SK-N-SH (cell line): ENCODE measurements at regions of chr2 and their contacts with region 1.

Region 1: GRCh38 chr2:218659258-218659987 is at the starts of genes BCS1L and ZNF142:
- DNase-seq: peak; percentile 96
- H3K4me3 ChIP-seq: peak within 1 kb of the TSS; percentile 90 to 94
- H3K27ac ChIP-seq: peak within 1 kb of the TSS; percentile 53 to 86
- H3K4me1 ChIP-seq: peaks cover 7 to 13% of the 10 kb centered on the region in 2 experiments; a peak in 2 of 4 replicates
- H3K27me3 ChIP-seq: no peaks in the 10 kb centered on the region
- CTCF ChIP-seq: no peak
- EP300 ChIP-seq: no peak
- RAD21 ChIP-seq: no peak
- polyA plus RNA-seq, gene BCS1L: 47.5 and 59.8 TPM in 2 replicates
- polyA plus RNA-seq, gene ZNF142: 5.7 and 8.1 TPM in 2 replicates

Region 2: GRCh38 chr2:218536804-218537494 is 122.5 kb before region 1 on chr2:
- CTCF ChIA-PET with region 1: no interaction called
- POLR2A ChIA-PET with region 1: no interaction called
- DNase-seq: no peak
- H3K4me3 ChIP-seq: no peak overlapping the region
- H3K27ac ChIP-seq: no peak overlapping the region
- H3K4me1 ChIP-seq: no peaks in the 10 kb centered on the region
- H3K27me3 ChIP-seq: no peaks in the 10 kb centered on the region
- CTCF ChIP-seq: no peak
- EP300 ChIP-seq: no peak
- RAD21 ChIP-seq: no peak

Region 3: DNA sequence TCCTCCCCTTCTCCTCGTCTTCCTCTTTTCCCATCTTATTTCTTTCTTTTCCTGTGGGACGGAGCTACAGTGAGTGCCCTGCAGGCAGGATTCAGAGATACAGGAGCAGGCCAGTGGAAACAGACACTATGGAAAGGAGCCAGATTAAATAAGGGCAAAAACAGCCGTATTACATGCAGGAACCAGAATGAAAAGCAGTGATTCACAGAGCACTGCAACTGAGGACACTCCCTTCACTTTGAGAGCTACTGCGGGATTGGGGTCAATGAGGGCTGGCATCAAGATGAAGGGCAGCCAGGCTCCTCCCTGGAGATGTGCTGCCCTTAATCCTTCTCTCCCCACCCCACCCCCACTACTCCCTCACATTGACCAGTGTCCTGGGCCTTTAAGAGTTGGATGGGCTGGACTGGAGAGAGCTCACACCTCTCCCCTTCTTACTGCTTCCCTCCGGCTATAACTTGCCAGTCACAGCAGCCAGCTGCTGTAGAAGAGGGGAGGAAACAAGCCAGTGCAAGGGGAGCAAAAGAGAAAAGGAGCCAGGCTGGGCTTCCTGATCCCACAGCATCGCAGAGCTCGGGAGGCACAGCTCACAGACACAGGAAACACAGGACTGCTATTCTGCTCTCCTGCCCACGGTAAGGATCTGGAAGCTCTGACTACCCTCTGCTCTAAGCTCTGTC is 51.8 kb before region 1 on chr2 and contains the start of gene PLCD4:
- CTCF ChIA-PET with region 1: interaction called, 3 read pairs
- POLR2A ChIA-PET with region 1: interaction called, 11 read pairs
- DNase-seq: peak; percentile 79
- H3K4me3 ChIP-seq: peak within 1 kb of the TSS; percentile 50 to 56
- H3K27ac ChIP-seq: peak within 1 kb of the TSS; percentile 62 to 99
- H3K4me1 ChIP-seq: peaks cover 10 to 25% of the 10 kb centered on the region in 2 experiments
- H3K27me3 ChIP-seq: no peaks in the 10 kb centered on the region
- CTCF ChIP-seq: peak; percentile 19; the same call in 1 of the 2 replicates
- EP300 ChIP-seq: peak in 1 of 2 experiments; percentile 21; a peak in 2 of 4 replicates
- RAD21 ChIP-seq: peak; percentile 14; the same call in 1 of the 2 replicates
- polyA plus RNA-seq, gene PLCD4: 8.5 and 11.0 TPM in 2 replicates

Region 4: GRCh38 chr2:218648088-218648786 is 11.2 kb before region 1 on chr2:
- CTCF ChIA-PET with region 1: interaction called, 36 read pairs
- POLR2A ChIA-PET with region 1: no interaction called
- DNase-seq: peak; percentile 76
- H3K4me3 ChIP-seq: no peak overlapping the region
- H3K27ac ChIP-seq: no peak overlapping the region; a peak in 1 of 4 replicates
- H3K4me1 ChIP-seq: no peaks in the 10 kb centered on the region; a peak in 1 of 4 replicates
- H3K27me3 ChIP-seq: no peaks in the 10 kb centered on the region
- CTCF ChIP-seq: peak; percentile 88
- EP300 ChIP-seq: no peak
- RAD21 ChIP-seq: peak; percentile 85

Region 5: DNA sequence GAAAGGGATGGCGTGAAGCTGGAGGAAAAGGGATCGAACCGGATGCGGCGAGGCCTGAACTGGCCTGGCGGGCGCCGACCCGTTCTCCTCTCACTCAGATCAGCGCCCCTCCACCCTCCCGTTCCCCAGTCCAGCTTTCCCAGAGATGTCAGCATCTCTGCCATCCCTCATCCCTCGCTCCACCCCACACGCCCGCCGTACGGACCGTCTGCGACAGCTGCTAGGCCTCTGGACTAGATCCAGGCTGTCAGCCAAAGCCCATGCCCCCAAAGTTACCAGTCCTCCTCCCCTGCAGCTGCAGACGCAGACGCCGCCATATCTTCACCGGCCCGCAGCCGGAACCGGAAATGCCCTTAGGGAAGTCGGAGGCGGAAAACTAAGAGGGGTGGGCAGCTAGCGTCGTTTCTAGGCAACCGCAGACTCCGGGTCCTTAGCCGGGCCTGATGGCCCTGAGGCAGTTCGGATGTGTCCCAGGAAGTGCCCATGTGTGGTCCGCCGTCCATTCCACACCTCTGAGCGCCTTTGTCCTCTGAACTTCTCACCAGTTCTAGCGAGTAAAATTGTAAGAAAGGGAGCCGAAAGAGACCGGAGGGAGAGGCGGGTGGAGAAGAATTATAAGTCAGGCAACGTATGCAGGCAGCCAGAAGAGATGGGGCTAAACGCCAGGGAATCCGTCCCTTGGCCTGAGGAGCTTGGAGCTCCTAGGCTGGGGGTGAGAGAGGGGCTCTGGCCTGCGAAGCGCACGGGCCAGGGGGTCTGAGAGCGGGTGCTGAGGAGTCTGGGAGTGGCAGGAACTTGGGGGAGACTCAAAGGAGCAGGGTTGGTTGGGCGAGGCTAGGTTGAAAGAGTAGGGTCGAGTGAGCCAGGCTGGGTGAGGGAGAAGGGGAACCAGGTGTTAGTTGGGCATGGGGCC is 12.5 kb after region 1 on chr2 and contains the starts of genes RNF25 and STK36:
- CTCF ChIA-PET with region 1: interaction called, 36 read pairs
- POLR2A ChIA-PET with region 1: interaction called, 28 read pairs
- DNase-seq: peak; percentile 91
- H3K4me3 ChIP-seq: peak within 1 kb of the TSS; percentile 94 to 97
- H3K27ac ChIP-seq: peak within 1 kb of the TSS; percentile 76 to 94
- H3K4me1 ChIP-seq: peaks cover 8 to 11% of the 10 kb centered on the region in 2 experiments; a peak in 3 of 4 replicates
- H3K27me3 ChIP-seq: no peaks in the 10 kb centered on the region
- CTCF ChIP-seq: no peak
- EP300 ChIP-seq: no peak; a peak in 1 of 4 replicates
- RAD21 ChIP-seq: no peak
- polyA plus RNA-seq, gene RNF25: 72.2 and 90.6 TPM in 2 replicates
- polyA plus RNA-seq, gene STK36: 53.5 and 83.2 TPM in 2 replicates

Region 6: DNA sequence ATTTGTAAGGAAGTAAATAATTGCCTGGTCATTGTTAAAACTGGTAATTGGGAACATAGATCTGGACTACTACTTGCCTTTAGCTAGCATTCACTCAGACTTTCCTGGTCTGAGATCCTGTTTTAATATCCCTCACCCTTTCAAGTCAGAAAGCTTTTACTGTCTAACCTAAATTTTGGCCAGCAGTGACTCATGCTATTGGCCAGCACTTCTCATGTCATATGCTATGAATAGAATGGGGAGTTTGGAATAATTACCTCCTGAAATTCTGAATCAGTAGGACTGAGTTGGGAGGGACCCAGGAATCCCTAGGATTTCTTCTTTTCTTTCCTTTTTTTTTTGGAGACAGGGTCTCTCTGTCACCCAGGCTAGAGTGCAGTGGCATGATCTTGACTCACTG is 31.8 kb after region 1 on chr2:
- CTCF ChIA-PET with region 1: interaction called, 15 read pairs
- POLR2A ChIA-PET with region 1: interaction called, 7 read pairs
- DNase-seq: no peak
- H3K4me3 ChIP-seq: no peak overlapping the region
- H3K27ac ChIP-seq: peak overlapping the region in 1 of 2 experiments; percentile 44; a peak in 1 of 4 replicates
- H3K4me1 ChIP-seq: no peaks in the 10 kb centered on the region; a peak in 1 of 4 replicates
- H3K27me3 ChIP-seq: no peaks in the 10 kb centered on the region
- CTCF ChIP-seq: no peak
- EP300 ChIP-seq: no peak
- RAD21 ChIP-seq: no peak

Region 7: DNA sequence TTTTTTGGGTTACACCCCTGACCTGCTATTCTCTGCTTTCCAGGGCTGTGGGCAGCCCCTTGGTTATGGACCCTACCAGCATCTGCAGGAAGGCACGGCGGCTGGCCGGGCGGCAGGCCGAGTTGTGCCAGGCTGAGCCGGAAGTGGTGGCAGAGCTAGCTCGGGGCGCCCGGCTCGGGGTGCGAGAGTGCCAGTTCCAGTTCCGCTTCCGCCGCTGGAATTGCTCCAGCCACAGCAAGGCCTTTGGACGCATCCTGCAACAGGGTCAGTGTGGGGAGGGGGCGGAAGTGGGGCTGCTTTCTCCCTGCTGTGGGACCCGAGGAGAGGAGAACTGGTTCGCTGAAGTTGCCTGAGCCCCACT is 211.5 kb after region 1 on chr2:
- CTCF ChIA-PET with region 1: no interaction called
- POLR2A ChIA-PET with region 1: no interaction called
- DNase-seq: no peak
- H3K4me3 ChIP-seq: no peak overlapping the region
- H3K27ac ChIP-seq: no peak overlapping the region
- H3K4me1 ChIP-seq: peaks cover 0 to 7% of the 10 kb centered on the region in 2 experiments; a peak in 1 of 4 replicates
- H3K27me3 ChIP-seq: peaks cover 31% of the 10 kb centered on the region; the same call in 1 of the 2 replicates
- CTCF ChIP-seq: no peak
- EP300 ChIP-seq: no peak
- RAD21 ChIP-seq: no peak